A549 (cell line): ENCODE measurements at regions of chr22 and their contacts with region 1.

Region 1: GRCh38 chr22:20904008-20904979 is 12.9 kb upstream of the CRKL start:
- DNase-seq: peak; percentile 48 to 82
- ATAC-seq: peak; percentile 82 to 99
- H3K4me3 ChIP-seq: no peak overlapping the region
- H3K27ac ChIP-seq: peak overlapping the region; percentile 62 to 86
- H3K4me1 ChIP-seq: peaks cover 23% of the 10 kb centered on the region
- CTCF ChIP-seq: no peak
- EP300 ChIP-seq: peak in 1 of 2 experiments; percentile 26; a peak in 1 of 5 replicates
- POLR2A ChIP-seq: no peak
- RAD21 ChIP-seq: no peak

Region 2: GRCh38 chr22:20741634-20742581 is 162.4 kb before region 1 on chr22:
- CTCF ChIA-PET with region 1: no interaction called
- POLR2A ChIA-PET with region 1: no interaction called
- DNase-seq: peak; percentile 18 to 32
- ATAC-seq: no peak
- H3K4me3 ChIP-seq: no peak overlapping the region
- H3K27ac ChIP-seq: no peak overlapping the region
- H3K4me1 ChIP-seq: no peaks in the 10 kb centered on the region
- CTCF ChIP-seq: peak; percentile 31; the same call in 2 of the 3 replicates
- EP300 ChIP-seq: no peak
- POLR2A ChIP-seq: no peak
- RAD21 ChIP-seq: peak; percentile 24 to 34; a peak in 2 of 5 replicates

Region 3: GRCh38 chr22:20758688-20759087 is 145.6 kb before region 1 on chr22:
- CTCF ChIA-PET with region 1: no interaction called
- POLR2A ChIA-PET with region 1: no interaction called
- DNase-seq: peak in 1 of 2 experiments; percentile 4
- ATAC-seq: peak; percentile 50 to 68; a peak in 3 of 6 replicates
- H3K4me3 ChIP-seq: no peak overlapping the region
- H3K27ac ChIP-seq: no peak overlapping the region
- H3K4me1 ChIP-seq: no peaks in the 10 kb centered on the region
- CTCF ChIP-seq: 0 out of 3 replicates have a peak, but pooled peaks have one; percentile 6
- EP300 ChIP-seq: no peak
- POLR2A ChIP-seq: no peak
- RAD21 ChIP-seq: no peak

Region 4: DNA sequence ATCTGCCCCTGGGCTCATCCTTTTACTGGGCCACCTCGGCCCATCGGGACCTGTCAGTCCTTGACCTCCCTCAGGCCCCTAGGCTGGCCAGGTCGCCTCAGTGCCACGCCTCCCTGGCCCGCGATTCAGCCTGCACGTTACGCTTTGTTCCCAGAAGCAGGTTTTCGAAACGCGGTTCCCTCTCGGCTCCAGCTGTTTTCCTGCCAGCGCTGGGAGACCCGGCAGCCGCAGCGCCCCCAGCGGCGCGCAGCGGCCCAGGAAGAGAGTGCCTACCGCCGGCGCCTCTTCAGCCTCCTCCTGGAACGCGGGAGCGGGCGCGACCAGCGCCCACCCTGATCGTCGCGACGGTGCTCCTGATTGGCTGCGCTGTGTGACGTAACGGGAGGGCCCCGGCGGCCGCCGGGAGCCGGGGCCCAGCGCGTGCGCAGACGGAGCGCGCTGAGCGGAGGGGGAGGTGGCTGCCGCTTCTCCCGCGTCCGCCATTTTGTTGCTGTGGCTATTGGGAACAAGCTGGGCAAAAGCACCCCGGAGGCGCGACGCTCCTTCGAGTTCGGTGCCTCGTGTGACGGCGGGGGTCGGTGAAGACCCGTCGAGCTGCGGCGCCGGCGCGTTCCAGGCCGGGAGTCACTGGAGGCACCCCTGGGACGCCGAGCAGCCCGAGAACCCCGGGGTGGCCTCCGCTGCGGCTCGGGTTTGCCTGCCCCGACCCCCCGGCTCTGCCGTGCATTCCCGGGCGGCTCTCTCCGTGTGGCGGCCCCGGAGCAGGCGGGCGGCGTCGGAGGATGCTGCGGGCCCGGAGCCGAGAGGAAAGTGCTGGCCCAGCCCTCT is 12.9 kb after region 1 on chr22 and contains the start of gene CRKL:
- CTCF ChIA-PET with region 1: interaction called, 31 read pairs
- POLR2A ChIA-PET with region 1: interaction called, 3 read pairs
- DNase-seq: peak; percentile 89 to 94
- ATAC-seq: peak; percentile 97 to 99
- H3K4me3 ChIP-seq: peak within 1 kb of the TSS; percentile 89
- H3K27ac ChIP-seq: peak within 1 kb of the TSS; percentile 95 to 100
- H3K4me1 ChIP-seq: peaks cover 22% of the 10 kb centered on the region
- CTCF ChIP-seq: peak; percentile 76
- EP300 ChIP-seq: no peak
- POLR2A ChIP-seq: peak; percentile 69
- RAD21 ChIP-seq: peak in 1 of 2 experiments; percentile 53; a peak in 3 of 5 replicates
- polyA plus RNA-seq, gene CRKL: 21.4 and 28.9 TPM in 2 replicates

Region 5: GRCh38 chr22:21014202-21014725 is 110.0 kb after region 1 on chr22:
- CTCF ChIA-PET with region 1: no interaction called
- POLR2A ChIA-PET with region 1: no interaction called
- DNase-seq: peak; percentile 70 to 74
- ATAC-seq: peak; percentile 77 to 92
- H3K4me3 ChIP-seq: peak overlapping the region; percentile 44
- H3K27ac ChIP-seq: peak overlapping the region; percentile 68 to 80
- H3K4me1 ChIP-seq: peaks cover 18% of the 10 kb centered on the region
- CTCF ChIP-seq: no peak
- EP300 ChIP-seq: no peak
- POLR2A ChIP-seq: no peak; the same call in 1 of the 2 replicates
- RAD21 ChIP-seq: no peak